Prostate gland (tissue), 2 donors: ENCODE measurements at regions of chr3 and their contacts with region 1.

Region 1: DNA sequence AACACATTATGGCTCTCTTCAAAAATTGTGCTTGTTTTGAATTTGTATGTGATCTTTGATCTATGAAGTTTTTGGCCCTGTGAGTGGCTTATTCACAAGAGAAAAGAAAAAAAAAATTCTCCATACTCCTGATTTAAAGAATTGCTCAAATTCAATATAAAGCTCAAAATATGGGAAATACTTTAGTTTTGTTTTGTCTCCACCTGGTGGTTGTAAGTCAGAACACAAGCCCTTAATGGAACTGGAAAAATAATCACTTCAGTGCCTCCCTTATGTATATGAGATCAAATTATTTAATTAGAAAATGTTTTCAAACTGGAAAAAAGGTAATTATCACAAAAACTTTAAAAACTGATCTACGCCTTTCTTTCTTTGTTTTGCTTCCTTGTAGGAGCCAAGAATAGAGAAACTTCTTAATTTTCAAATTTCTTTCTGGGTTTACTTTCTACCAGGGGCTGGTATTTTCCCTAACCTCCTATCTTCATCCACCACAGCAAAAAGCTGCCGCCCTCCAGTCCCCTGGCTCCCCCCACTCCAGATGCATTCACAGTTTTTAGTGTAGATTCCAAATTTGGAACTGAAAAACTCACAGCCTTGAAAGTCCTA is 50.6 kb downstream of the SERP1 start:
- DNase-seq: no peak
- H3K4me3 ChIP-seq: no peak overlapping the region
- H3K27ac ChIP-seq: no peak overlapping the region
- H3K4me1 ChIP-seq: no peaks in the 10 kb centered on the region
- H3K27me3 ChIP-seq: no peaks in the 10 kb centered on the region
- CTCF ChIP-seq: peak; percentile 37 to 93 (median 88)
- POLR2A ChIP-seq: no peak

Region 2: GRCh38 chr3:150220799-150221198 is 274.9 kb before region 1 on chr3:
- intact Hi-C with region 1: loop called (anchors 5 kb)
- DNase-seq: no peak
- H3K4me3 ChIP-seq: peak overlapping the region in 1 of 2 donors; percentile 21
- H3K27ac ChIP-seq: no peak overlapping the region
- H3K4me1 ChIP-seq: no peaks in the 10 kb centered on the region
- H3K27me3 ChIP-seq: no peaks in the 10 kb centered on the region
- CTCF ChIP-seq: no peak
- POLR2A ChIP-seq: no peak

Region 3: DNA sequence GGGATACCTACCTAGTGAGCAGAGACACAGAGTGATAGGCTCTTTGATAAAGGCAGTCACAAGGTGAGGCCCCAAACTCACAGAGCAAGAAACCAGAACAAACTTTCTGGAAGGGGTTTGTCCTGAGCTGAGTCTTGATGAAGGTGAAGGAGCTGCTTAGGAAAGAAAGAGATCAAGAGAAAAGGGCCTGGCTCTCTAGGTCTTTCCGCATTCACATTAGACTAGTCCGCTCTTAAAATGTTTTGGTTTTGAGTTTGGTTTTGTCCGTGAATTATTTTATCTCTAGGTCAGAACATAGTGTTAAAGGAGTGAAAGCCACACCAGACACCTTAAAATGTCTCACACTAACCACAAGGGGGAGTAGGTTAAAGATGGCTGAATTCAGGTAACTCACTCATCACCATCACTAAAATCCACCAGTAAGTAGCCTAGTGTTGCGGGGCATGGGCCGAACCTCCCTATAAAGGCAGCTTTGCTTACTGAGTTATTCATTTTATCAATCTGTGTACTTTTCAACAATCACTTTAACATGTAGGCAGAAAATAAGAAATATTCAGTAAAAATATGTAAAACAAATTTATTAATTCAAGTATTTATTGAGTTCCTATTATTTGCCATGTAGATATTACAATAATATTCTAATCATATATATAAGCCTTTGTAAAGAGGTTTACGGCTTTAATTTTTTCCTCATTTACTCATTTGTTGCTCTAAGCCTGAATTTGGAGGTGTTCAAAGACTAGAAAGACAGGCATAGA is 209.1 kb before region 1 on chr3:
- intact Hi-C with region 1: loop called (anchors 5 kb)
- DNase-seq: peak; percentile 10
- H3K4me3 ChIP-seq: no peak overlapping the region
- H3K27ac ChIP-seq: no peak overlapping the region
- H3K4me1 ChIP-seq: no peaks in the 10 kb centered on the region
- H3K27me3 ChIP-seq: no peaks in the 10 kb centered on the region
- CTCF ChIP-seq: peak; percentile 13 to 71 (median 59)
- POLR2A ChIP-seq: no peak

Region 4: GRCh38 chr3:150538324-150539208 is 42.9 kb after region 1 on chr3:
- intact Hi-C with region 1: no loop called
- DNase-seq: peak; percentile 47
- H3K4me3 ChIP-seq: no peak overlapping the region
- H3K27ac ChIP-seq: peak overlapping the region; percentile 23 to 38
- H3K4me1 ChIP-seq: peaks cover 14% of the 10 kb centered on the region
- H3K27me3 ChIP-seq: no peaks in the 10 kb centered on the region
- CTCF ChIP-seq: no peak
- POLR2A ChIP-seq: no peak